Activated CD4-positive, alpha-beta memory T cell treated with anti-CD3 and anti-CD28 coated beads for 36 hours (primary cell): ENCODE measurements at regions of chr1 and their contacts with region 1.

Region 1: DNA sequence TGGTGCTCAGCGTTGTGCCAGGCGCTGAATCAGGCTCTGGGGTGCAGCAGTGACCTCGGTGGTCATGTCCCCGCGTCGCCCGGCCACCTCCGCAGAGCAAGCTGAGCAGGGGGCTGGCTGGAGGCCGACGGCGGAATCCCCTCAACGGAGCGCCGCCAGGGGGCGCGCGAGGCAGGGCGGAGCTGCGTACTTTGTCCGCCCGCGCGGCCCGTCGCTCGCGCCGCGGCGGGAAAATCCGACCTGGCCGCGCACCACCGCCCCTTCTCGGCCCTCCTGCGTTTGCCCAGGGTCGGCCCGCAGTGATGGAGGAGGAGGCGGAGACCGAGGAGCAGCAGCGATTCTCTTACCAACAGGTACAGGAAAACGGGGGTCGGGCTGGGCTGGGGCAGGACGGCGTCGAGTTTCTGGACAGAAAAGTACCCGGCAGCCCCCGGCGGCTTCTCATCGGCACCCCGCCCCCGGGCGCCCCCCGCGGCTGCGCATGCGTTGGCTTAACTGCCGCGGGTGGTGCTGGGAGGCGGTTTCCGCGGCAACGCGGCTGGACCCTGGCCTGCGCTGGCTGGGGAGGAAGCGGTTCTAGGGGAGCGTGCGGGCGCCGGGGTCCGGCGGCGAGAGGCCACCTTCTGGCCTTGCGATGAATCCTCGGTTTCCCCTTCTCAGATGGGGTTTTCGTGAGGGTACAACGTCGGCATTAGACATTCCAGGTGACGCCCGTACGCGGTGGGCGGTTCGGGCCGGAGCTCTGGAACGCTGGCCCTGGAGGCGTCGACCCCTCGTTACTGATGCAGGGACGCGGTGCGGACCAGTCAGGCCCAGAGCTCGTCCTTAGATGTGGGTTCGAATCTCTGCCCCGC is at the start of gene CENPS:
- DNase-seq: peak; percentile 87
- H3K4me3 Mint-ChIP-seq: peak within 1 kb of the TSS; percentile 89
- H3K27ac Mint-ChIP-seq: peak within 1 kb of the TSS; percentile 87
- H3K4me1 Mint-ChIP-seq: peaks cover 20% of the 10 kb centered on the region
- H3K27me3 Mint-ChIP-seq: no peaks in the 10 kb centered on the region
- total RNA-seq, gene CENPS: 20.0 to 22.7 TPM

Region 2: GRCh38 chr1:9874959-9875635 is 555.3 kb before region 1 on chr1:
- CTCF ChIA-PET with region 1: no interaction called
- POLR2A ChIA-PET with region 1: no interaction called
- intact Hi-C with region 1: loop called (anchors 2 kb)
- DNase-seq: peak; percentile 83
- H3K4me3 Mint-ChIP-seq: no peak overlapping the region
- H3K27ac Mint-ChIP-seq: no peak overlapping the region
- H3K4me1 Mint-ChIP-seq: peaks cover 4% of the 10 kb centered on the region
- H3K27me3 Mint-ChIP-seq: no peaks in the 10 kb centered on the region

Region 3: DNA sequence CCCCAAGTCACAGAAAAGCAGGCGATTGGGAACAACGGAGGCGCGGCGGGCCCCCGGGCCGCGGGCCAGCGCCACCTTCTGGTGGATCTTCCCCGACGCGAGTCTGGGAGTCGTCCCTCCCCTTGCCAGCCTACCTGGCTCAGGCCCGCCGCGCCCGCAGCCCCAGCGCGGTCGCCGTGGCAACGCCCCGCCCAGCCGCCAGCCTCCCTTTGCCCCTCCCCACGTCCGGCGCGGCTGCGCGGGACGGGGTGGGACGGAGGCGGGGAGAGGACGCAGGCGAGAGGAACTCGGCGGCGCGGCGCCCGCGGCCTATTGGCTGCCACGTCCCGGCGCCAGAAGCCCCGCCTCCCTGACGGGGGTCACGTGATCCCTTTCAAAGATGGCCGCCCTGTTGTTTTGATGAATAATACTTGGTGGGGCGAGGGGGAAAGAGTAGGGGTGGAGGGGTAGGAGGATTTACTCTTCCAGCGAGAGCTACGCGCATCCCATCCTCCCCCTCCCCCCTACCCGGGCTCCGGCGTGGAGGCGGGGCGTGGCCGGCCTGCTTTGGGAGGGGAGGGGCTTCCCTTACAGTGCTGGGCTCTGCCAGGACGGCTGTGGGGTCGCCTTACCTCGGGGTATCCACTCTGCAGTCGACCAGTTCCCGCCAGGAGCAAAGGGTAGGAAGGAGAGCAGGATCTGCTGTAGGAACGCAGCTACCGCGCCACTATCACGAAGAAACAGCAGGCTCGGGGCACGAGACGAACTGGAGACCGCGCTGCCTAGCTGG is 397.7 kb before region 1 on chr1 and contains the start of gene UBE4B:
- CTCF ChIA-PET with region 1: no interaction called
- POLR2A ChIA-PET with region 1: no interaction called
- intact Hi-C with region 1: loop called (anchors 2 kb)
- DNase-seq: peak; percentile 99
- H3K4me3 Mint-ChIP-seq: peak within 1 kb of the TSS; percentile 95
- H3K27ac Mint-ChIP-seq: peak within 1 kb of the TSS; percentile 89
- H3K4me1 Mint-ChIP-seq: peaks cover 23% of the 10 kb centered on the region
- H3K27me3 Mint-ChIP-seq: no peaks in the 10 kb centered on the region
- total RNA-seq, gene UBE4B: 24.3 to 25.3 TPM

Region 4: DNA sequence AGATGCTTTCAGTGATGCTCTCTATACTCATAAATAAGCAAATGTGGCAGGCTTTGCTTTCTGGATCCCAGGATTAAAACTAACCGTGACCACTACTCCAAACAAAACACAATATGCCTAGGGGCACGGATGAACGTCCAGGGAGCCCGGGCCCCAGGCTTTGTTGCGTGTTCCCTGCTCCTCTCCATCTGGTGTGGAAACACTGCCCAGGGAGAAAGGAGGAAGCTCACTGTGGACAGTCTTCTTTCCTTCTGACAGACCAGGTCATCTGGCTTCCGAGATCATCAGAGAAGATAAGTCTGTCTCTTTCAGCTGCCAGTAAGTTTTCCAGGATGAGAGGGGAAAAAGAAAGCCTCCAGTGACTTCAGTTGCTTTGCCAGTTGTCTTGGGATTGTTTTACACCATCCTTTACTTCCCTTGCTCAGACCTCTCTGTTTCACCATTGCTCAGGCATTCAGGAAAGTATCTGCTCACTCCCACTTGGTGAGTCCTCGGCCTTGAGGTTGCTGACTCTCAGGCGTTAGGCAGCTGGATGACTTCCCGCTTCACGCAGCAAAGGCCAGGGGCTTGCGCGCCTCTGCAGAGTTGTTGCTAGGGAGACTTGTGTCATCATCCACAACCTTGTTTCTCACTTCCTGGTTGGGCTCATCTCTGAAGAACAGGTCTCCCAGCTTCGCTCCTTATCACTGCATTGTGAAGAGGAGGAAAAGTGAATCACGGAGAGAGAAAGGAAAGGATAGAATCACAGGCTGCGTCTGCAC is 52.2 kb before region 1 on chr1:
- CTCF ChIA-PET with region 1: interaction called, 3 read pairs
- POLR2A ChIA-PET with region 1: no interaction called
- intact Hi-C with region 1: loop called (anchors 2 kb)
- DNase-seq: no peak
- H3K4me3 Mint-ChIP-seq: no peak overlapping the region
- H3K27ac Mint-ChIP-seq: no peak overlapping the region
- H3K4me1 Mint-ChIP-seq: no peaks in the 10 kb centered on the region
- H3K27me3 Mint-ChIP-seq: no peaks in the 10 kb centered on the region

Region 5: DNA sequence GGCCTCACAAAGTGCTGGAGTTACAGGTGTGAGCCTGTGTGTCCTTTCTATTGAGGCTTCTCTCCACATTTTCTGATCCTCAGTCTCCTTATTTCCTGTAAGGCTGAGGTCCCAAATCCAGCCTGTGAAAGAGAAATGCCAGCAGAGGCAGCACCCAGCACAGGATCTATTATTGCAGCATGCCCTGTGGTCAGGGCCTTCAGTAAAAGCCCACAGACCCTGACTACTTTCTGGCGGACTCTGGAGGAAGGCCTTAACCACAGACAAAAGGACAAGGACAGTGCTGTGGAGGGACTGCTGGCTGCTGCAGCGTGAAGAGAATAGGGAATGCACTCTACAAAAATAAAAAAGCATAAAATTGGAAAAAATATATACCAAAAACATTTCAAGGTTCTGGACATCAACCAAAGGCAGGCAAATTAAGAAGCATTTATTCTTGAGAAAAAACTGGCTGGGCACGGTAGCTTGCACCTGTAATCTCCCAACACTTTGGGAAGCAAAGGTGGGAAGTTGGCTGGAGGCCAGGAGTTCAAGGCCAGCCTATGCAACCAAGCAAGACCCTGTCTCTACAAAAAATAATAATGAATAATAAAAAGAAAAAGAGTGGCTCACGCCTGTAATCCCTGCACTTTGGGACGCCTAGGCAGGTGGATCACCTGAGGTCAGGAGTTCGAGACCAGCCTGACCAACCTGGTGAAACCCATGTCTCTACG is 41.0 kb before region 1 on chr1:
- CTCF ChIA-PET with region 1: no interaction called
- POLR2A ChIA-PET with region 1: no interaction called
- intact Hi-C with region 1: no loop called
- DNase-seq: no peak
- H3K4me3 Mint-ChIP-seq: no peak overlapping the region
- H3K27ac Mint-ChIP-seq: no peak overlapping the region
- H3K4me1 Mint-ChIP-seq: peaks cover 3% of the 10 kb centered on the region
- H3K27me3 Mint-ChIP-seq: no peaks in the 10 kb centered on the region

Region 6: GRCh38 chr1:10415211-10415930 is 15.1 kb before region 1 on chr1:
- CTCF ChIA-PET with region 1: interaction called, 11 read pairs
- POLR2A ChIA-PET with region 1: no interaction called
- intact Hi-C with region 1: no loop called
- DNase-seq: no peak
- H3K4me3 Mint-ChIP-seq: no peak overlapping the region
- H3K27ac Mint-ChIP-seq: peak overlapping the region; percentile 82
- H3K4me1 Mint-ChIP-seq: peaks cover 4% of the 10 kb centered on the region
- H3K27me3 Mint-ChIP-seq: no peaks in the 10 kb centered on the region

Region 7: DNA sequence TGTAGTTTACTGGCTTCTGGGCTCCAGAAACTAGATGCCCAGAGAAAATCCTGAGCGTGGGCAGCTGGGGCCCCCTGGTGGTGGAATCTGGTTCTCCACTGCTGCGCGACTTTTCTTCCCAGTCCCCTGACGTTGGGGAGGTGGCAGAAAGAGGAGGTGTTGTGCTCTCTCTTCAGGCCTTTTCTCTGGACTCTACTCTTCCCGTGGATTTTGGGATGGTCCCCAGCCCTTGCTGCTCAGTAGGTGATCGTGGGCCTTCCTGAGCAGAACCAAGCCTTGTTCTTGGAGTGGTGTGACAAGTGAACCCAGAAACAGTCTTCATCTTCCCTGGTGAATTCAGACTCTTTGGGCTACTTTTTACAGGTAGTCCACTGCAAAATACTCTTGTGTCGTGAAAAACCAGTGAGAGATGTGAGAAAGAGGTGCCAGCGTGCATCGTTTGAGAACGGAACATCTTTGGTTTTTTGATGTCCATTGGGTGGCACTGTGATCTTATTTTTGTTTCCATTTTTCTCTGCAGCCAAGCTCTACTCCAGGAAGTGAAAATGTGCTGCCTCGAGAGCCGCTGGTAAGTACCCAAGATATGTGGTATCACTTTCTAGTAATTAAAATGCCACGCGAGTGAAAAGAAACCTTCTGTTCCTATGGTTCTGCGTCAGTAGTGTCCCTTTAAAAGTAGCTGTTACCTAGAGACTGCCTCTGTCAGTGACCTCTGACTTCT is 64.5 kb after region 1 on chr1:
- CTCF ChIA-PET with region 1: interaction called, 106 read pairs
- POLR2A ChIA-PET with region 1: interaction called, 4 read pairs
- intact Hi-C with region 1: loop called (anchors 1 kb)
- DNase-seq: peak; percentile 89
- H3K4me3 Mint-ChIP-seq: peak overlapping the region; percentile 63
- H3K27ac Mint-ChIP-seq: peak overlapping the region; percentile 79
- H3K4me1 Mint-ChIP-seq: peaks cover 41% of the 10 kb centered on the region
- H3K27me3 Mint-ChIP-seq: no peaks in the 10 kb centered on the region

Region 8: DNA sequence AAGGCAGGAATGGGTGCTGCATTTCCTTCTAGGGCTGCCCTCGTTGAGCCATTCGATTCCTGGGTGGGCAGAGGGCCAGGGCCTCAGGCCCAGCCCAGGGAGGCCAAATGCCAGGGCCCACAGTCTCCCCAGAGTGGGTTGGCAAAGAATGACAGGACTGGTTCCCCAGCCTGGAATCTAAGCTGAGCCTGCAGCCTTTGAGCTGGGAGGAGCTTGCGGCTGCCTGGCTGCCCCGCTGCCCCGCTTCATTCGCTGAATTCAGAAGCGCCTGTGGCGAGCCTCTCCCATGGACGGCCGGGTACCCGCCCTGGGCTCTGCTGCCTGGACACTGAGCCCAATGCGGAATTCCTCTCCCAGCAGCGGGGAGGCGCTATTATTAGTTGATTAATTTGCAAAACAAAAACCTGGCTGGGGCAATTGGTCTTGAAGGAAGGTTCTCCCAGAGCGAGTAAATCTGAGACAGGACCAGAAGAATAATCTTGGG is 549.7 kb after region 1 on chr1:
- CTCF ChIA-PET with region 1: no interaction called
- POLR2A ChIA-PET with region 1: no interaction called
- intact Hi-C with region 1: no loop called
- DNase-seq: no peak
- H3K4me3 Mint-ChIP-seq: no peak overlapping the region
- H3K27ac Mint-ChIP-seq: no peak overlapping the region
- H3K4me1 Mint-ChIP-seq: no peaks in the 10 kb centered on the region
- H3K27me3 Mint-ChIP-seq: peaks cover 27% of the 10 kb centered on the region